ENCODE measurements at regions of chr11 and their contacts with region 1.

Region 1: DNA sequence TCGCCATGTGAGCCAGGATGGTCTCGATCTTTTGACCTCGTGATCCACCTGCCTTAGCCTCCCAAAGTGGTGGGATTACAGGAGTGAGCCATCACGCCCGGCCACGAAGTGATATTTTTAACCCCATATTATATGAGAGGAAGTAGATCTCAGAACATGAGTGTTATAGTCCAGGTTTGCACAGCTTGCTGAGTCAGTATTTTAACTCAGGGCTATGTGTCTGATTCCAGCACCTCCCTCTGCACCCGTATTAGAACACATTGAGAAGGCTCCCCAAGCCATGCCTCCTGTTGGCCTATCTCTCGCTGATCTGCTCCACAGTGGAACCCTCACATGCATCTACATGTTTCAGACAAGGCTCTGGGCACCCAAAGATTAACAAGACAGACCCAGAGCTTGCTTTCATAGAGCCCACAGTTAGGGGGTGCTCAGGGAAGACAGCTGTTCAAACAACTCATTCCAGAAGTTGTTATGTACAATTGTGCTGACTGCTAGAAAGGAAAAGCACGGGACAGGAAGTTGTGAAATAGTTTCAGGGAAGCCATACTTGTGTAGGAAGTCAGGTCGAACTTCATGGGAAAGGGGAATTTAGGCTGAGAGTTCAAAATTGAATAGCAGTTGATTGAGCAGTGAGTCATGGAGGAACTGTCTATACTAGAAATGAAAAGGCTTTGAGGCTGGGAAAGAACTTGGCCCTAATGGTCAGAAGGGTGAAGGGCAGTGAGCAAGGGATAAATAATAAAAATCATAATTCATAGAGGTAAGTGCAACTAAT is 49.3 kb upstream of the CLPB start:
- DNase-seq: peak; percentile 25
- H3K4me3 Mint-ChIP-seq: no peak overlapping the region
- H3K27ac Mint-ChIP-seq: peak overlapping the region; percentile 6
- H3K4me1 Mint-ChIP-seq: peaks cover 9% of the 10 kb centered on the region
- H3K27me3 Mint-ChIP-seq: no peaks in the 10 kb centered on the region

Region 2: GRCh38 chr11:72446902-72447769 is 36.5 kb before region 1 on chr11:
- CTCF ChIA-PET with region 1: no interaction called
- POLR2A ChIA-PET with region 1: no interaction called
- intact Hi-C with region 1: no loop called
- DNase-seq: no peak
- H3K4me3 Mint-ChIP-seq: no peak overlapping the region
- H3K27ac Mint-ChIP-seq: no peak overlapping the region
- H3K4me1 Mint-ChIP-seq: no peaks in the 10 kb centered on the region
- H3K27me3 Mint-ChIP-seq: peaks cover 8% of the 10 kb centered on the region

Region 3: GRCh38 chr11:72519220-72519881 is 35.8 kb after region 1 on chr11:
- CTCF ChIA-PET with region 1: no interaction called
- POLR2A ChIA-PET with region 1: no interaction called
- intact Hi-C with region 1: loop called (anchors 1 kb)
- DNase-seq: peak; percentile 19
- H3K4me3 Mint-ChIP-seq: peak overlapping the region; percentile 61
- H3K27ac Mint-ChIP-seq: peak overlapping the region; percentile 47
- H3K4me1 Mint-ChIP-seq: peaks cover 24% of the 10 kb centered on the region
- H3K27me3 Mint-ChIP-seq: no peaks in the 10 kb centered on the region

Region 4: DNA sequence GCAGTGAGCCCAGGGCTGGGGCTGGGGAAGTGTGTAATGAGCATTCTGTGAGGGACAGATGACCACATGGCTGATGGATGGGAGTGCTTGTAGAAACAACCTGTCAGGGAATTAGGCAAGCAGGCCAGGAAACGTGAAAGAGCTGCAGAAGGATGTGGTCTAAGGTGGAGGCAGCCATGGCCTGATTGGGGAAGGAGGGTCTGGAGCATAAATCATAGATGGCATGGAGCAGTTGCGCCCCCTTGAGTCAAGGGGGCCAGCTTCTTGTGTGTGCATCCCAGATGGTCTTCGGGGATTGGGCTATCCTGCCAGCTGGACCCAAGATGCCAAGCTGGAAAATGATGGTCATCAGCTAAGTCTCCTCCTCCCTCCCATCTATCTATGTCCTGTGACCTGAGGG is 70.1 kb after region 1 on chr11:
- CTCF ChIA-PET with region 1: interaction called, 16 read pairs
- POLR2A ChIA-PET with region 1: no interaction called
- intact Hi-C with region 1: loop called (anchors 1 kb)
- DNase-seq: peak; percentile 58
- H3K4me3 Mint-ChIP-seq: no peak overlapping the region
- H3K27ac Mint-ChIP-seq: no peak overlapping the region
- H3K4me1 Mint-ChIP-seq: peaks cover 7% of the 10 kb centered on the region
- H3K27me3 Mint-ChIP-seq: peaks cover 5% of the 10 kb centered on the region

Region 5: GRCh38 chr11:72573072-72573854 is 89.7 kb after region 1 on chr11:
- CTCF ChIA-PET with region 1: interaction called, 10 read pairs
- POLR2A ChIA-PET with region 1: no interaction called
- intact Hi-C with region 1: loop called (anchors 1 kb)
- DNase-seq: peak; percentile 51
- H3K4me3 Mint-ChIP-seq: no peak overlapping the region
- H3K27ac Mint-ChIP-seq: no peak overlapping the region
- H3K4me1 Mint-ChIP-seq: peaks cover 9% of the 10 kb centered on the region
- H3K27me3 Mint-ChIP-seq: peaks cover 9% of the 10 kb centered on the region

Region 6: GRCh38 chr11:72642884-72643511 is 159.4 kb after region 1 on chr11:
- CTCF ChIA-PET with region 1: interaction called, 7 read pairs
- POLR2A ChIA-PET with region 1: no interaction called
- intact Hi-C with region 1: loop called (anchors 2 kb)
- DNase-seq: peak; percentile 71
- H3K4me3 Mint-ChIP-seq: peak overlapping the region; percentile 11
- H3K27ac Mint-ChIP-seq: no peak overlapping the region
- H3K4me1 Mint-ChIP-seq: peaks cover 2% of the 10 kb centered on the region
- H3K27me3 Mint-ChIP-seq: peaks cover 1% of the 10 kb centered on the region